ENCODE measurements at regions of chr12 and their contacts with region 1.

Region 1: DNA sequence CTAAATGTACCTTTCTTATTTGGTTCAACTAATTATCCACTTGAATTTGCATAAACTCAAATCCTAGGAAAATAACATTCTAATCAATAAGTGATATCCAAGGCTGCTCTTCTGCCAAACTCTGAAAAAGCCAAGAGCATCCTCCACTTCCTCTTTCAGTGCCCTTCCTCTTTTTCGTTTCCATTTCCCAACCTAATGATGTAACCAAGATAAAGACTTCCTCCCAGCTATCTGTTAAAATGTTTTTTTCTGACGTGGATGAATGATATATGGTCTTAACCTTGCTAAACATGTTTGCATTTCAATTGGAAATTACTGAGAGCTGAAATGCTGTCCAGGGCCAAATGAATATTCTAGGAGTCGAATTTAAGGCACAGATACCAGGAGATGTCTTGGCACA is 459.5 kb upstream of the PDE3A start:
- DNase-seq: no peak
- ATAC-seq: no peak

Region 2: GRCh38 chr12:19872621-19873540 is 35.9 kb before region 1 on chr12:
- intact Hi-C with region 1: no loop called
- DNase-seq: no peak
- ATAC-seq: no peak

Region 3: DNA sequence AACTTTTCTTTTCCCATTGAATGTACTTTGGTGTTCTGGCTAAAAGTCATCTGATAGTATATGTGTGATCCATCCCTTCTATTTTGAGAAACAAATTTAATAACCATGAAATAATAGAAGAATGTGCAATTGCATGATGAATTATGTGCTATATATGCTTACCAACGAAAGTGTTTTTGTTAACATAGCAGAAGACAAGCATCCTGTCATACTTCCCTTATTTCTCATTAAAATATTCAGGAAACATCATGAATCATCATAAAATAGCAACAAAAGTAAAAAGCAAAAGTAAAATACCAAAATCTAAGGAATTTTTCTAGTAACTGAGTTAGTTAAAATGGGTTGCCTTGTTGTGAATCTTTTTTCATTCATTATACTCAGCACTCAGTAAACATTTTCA is 50.5 kb after region 1 on chr12:
- intact Hi-C with region 1: loop called in 1 of 2 experiments (anchors 2 kb)
- DNase-seq: no peak
- ATAC-seq: peak in 1 of 2 donors; percentile 17

Region 4: DNA sequence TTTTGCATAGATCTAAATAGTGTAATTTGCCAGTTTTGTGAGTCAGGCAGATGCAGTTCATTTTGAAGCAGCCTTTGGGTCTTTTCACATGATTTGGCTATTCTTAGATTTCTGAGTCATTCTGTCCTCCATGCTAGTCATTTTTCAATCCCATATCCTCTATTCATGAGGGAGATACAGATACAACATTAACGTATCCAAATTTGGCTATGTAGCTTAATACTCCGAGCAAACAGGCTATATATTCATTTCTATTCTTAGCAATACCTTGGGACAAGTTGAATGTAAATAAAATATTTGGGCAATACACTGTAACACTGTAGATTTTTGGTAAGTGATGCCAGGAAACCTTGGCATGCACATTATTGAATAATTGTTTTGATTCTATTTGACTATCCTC is 188.8 kb after region 1 on chr12:
- intact Hi-C with region 1: no loop called
- DNase-seq: no peak
- ATAC-seq: peak in 1 of 2 donors; percentile 43

Measured in left cardiac atrium (tissue), 4 donors.